Left cardiac atrium (tissue), 4 donors: ENCODE measurements at regions of chr4 and their contacts with region 1.

Region 1: DNA sequence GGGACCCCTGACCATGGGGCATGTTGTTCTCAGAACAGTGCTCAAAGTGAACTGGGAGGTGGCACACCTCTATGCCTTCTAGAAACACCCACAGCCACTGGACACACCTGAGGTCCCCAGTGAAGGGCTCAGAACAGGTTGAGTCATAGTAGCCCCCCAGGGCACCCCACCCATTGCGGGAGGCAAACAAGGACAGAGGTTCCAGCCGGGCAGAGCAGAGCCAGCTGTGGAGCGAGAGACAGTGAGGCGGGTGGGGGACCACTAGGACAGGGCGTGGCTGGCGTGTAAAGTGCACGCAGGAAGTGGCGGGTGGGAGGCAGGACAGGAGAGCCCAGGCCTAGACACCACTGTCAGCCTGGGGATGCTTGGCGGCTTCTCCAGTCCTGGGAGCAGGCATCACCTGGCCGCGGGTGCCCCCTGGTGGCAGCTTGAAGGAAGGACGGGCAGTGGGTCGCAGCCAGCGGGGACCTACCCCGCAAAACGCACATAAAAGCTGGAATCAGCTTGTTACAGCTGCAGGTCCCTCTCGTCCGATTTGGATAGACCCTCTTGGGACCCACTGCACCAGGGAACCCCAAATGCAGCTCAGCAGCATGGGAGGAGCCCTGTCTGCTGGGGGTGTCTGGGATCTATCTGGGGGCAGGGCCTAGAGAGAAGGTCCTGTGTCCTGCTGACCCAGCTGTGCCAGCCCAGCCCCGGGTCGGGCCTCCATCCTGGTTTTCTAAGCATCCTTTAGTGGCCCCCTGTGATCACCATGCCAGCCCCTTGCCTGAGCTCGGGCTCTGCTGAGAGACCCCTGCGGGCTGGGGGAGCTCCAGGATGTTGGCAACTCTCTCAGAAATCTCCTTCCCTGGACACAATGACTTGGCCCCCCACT is 57.6 kb downstream of the WFS1 start:
- DNase-seq: peak; percentile 82
- ATAC-seq: peak; percentile 80 to 83

Region 2: GRCh38 chr4:6250235-6250983 is 76.9 kb before region 1 on chr4:
- intact Hi-C with region 1: loop called in 1 of 2 experiments (anchors 1 kb)
- DNase-seq: no peak
- ATAC-seq: peak in 1 of 2 donors; percentile 19

Region 3: DNA sequence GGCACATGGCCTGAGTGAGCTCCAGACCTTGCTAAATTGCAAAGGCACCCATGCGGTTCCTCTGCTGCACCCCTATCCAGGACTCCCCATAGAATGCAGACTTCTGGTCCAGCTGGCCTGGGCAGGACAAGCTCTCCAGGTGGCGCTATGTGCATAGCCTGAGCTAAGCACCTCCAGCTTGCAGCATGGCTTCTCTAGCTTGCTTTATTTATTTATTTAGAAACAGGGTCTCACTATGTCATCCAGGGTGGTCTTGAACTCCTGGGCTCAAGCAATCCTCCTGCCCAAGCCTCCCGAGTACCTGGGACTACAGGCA is 63.1 kb before region 1 on chr4:
- intact Hi-C with region 1: loop called (anchors 1 to 5 kb)
- DNase-seq: peak; percentile 57
- ATAC-seq: peak; percentile 56 to 84

Region 4: DNA sequence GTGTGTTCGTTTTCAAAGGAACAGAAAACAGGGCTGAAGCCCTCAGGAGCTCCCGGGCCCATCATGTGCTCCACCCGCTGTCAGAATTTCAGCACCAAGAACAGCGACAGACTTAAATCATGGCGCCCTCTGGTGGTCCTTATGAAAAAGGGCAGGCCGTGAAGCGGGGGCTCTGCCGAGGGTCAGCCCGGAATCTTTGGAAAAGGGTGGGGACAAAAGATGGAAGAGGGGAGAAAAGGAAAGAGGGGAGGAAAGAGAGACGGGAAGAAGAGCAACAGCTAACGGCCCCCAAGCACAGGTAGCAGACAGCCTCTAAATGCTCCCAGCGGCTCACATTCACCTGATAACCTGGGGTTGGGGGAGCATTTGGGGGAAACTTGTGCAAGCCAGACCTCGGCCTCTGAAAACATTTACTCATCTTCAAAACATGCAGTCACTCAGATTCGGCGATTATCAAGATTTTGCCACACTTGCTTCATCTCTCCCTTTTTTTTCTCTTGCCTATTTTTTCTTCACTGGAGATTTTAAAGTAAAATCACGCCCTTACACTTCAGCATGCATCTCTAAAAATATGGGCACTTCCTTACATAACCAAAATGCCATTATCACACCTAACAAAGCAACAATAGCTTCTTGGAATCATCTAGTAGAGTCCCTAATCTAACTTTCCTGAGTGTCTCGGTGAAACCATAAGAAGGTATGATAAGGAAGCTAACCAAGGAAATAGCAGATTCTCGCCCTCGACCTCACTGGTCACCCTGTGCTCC is 219.6 kb after region 1 on chr4:
- intact Hi-C with region 1: loop called in 1 of 2 experiments (anchors 5 kb)
- DNase-seq: peak; percentile 37
- ATAC-seq: peak in 1 of 2 donors; percentile 46